Activated CD4-positive, alpha-beta T cell treated with anti-CD3 and anti-CD28 coated beads for 36 hours (primary cell): ENCODE measurements at regions of chrX and their contacts with region 1.

Region 1: GRCh38 chrX:15471016-15471415 is 22.1 kb downstream of the PIR start:
- DNase-seq: peak; percentile 69
- ATAC-seq: peak; percentile 68
- H3K4me3 Mint-ChIP-seq: no peak overlapping the region
- H3K27ac Mint-ChIP-seq: no peak overlapping the region
- H3K4me1 Mint-ChIP-seq: no peaks in the 10 kb centered on the region
- H3K27me3 Mint-ChIP-seq: no peaks in the 10 kb centered on the region

Region 2: DNA sequence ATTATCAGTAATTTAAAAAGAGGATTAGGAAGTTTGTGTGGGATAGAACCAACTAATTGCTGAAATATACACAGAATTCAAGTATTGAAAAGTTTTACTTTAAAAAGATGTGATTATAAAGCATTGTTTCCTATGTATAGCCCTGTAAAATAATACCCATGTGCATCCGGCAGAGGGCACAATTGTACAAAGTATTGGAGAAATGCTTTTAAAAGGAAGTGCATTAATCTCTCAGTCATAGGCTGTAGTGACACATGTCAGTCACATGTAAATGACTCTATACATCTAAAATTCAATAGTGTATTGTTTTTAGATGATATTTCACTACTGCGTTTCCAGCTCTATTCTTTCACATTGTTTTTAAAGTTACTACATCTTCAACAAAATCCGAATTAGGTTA is 1431.7 kb before region 1 on chrX:
- CTCF ChIA-PET with region 1: no interaction called
- POLR2A ChIA-PET with region 1: no interaction called
- intact Hi-C with region 1: loop called in 1 of 2 experiments (anchors 2 kb)
- DNase-seq: peak; percentile 71
- ATAC-seq: peak; percentile 68
- H3K4me3 Mint-ChIP-seq: no peak overlapping the region
- H3K27ac Mint-ChIP-seq: no peak overlapping the region
- H3K4me1 Mint-ChIP-seq: no peaks in the 10 kb centered on the region
- H3K27me3 Mint-ChIP-seq: no peaks in the 10 kb centered on the region

Region 3: DNA sequence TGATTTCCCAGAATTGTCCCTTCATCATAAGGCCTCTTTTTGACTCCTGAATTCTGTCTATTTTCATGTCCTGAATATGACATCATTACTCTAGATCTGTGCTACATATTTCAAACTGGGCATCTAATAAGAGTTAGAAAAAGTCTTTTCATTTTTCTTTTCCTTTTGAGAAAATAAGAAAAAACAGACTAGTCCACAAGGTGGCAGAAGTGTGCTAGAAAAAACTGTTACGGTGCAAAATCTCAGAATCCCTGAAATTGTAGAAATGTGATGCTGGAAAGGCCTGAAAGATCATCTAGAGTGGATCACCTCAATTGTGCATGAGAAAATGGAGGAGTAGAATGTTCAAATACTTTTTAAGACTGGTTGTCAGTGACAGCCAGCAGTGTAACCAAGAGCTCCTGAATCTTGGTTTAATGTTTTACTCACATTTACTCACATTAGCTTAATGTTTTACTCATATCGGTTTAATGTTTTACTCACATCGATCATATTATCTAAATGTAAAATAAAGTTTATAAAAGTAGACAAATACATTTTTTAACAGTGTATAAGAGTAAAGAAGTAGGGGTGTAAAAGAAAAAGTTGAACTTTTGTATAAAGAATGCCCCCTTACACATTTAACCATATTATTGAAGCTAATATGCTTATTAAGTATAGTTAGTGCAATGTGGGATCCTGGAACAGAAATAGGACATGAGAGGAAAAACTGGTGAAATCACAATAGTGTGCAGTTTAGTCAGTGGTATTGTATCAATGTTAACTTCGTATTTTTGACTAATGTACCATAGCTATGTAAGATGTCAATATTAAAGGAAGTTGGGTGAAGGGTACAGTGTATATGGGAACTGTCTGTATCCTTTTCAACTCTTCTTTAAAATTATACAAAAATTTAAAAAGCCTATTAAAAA is 170.8 kb before region 1 on chrX:
- CTCF ChIA-PET with region 1: no interaction called
- POLR2A ChIA-PET with region 1: no interaction called
- intact Hi-C with region 1: loop called (anchors 1 to 5 kb)
- DNase-seq: no peak
- ATAC-seq: no peak
- H3K4me3 Mint-ChIP-seq: no peak overlapping the region
- H3K27ac Mint-ChIP-seq: no peak overlapping the region
- H3K4me1 Mint-ChIP-seq: peaks cover 2% of the 10 kb centered on the region
- H3K27me3 Mint-ChIP-seq: peaks cover 1% of the 10 kb centered on the region

Region 4: GRCh38 chrX:15349046-15349445 is 122.0 kb before region 1 on chrX:
- CTCF ChIA-PET with region 1: interaction called, 32 read pairs
- POLR2A ChIA-PET with region 1: no interaction called
- intact Hi-C with region 1: loop called (anchors 1 to 2 kb)
- DNase-seq: peak; percentile 11
- ATAC-seq: peak; percentile 58
- H3K4me3 Mint-ChIP-seq: no peak overlapping the region
- H3K27ac Mint-ChIP-seq: no peak overlapping the region
- H3K4me1 Mint-ChIP-seq: no peaks in the 10 kb centered on the region
- H3K27me3 Mint-ChIP-seq: peaks cover 2% of the 10 kb centered on the region

Region 5: DNA sequence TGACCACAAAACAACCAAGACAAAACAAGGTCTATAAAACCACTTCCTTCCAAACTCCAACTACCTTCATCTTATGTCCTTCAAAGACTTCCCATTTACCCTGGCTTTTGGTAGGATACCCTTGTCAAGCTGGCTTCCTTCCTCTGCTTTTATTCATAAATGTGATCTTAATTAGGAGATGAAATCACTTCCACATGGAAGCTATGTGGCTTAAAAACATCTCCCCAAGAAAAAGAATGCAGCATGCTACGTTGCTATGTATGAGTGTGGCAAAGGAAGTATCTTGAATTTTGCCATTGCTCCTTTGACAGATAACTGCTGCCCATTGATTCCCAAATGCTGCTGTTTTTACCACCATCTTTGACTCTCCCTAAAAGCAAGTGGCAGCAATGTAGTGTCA is 40.4 kb before region 1 on chrX:
- CTCF ChIA-PET with region 1: no interaction called
- POLR2A ChIA-PET with region 1: no interaction called
- intact Hi-C with region 1: no loop called
- DNase-seq: no peak
- ATAC-seq: no peak
- H3K4me3 Mint-ChIP-seq: no peak overlapping the region
- H3K27ac Mint-ChIP-seq: no peak overlapping the region
- H3K4me1 Mint-ChIP-seq: no peaks in the 10 kb centered on the region
- H3K27me3 Mint-ChIP-seq: peaks cover 17% of the 10 kb centered on the region

Region 6: DNA sequence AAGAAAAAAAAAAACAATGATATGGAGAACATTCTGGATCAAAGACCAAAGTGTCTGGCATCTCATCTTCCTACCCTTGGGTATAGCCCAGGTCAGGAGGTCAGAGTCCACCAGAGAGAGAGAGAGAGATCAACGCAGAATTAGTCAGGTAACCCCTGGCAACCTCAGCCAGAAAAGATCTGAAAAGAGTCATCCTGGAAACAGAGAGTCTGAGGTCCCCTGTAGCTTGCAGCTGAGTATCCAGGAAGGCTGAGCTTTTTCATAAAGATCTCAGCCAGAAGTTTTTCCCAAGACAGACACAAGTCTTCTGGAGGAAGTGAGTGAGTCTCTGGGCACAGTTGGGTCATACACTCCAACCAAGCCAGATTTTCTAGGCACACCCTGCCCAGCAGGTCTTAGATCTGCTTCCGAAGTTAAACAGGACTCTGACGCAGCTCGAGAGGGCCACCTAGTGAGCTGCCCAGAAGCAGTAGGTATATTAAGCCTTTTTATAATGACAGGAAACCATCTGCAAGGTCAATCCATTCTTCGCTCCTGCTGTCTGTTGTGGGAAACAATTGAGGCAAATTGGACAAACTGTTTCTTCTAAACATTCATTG is 94.1 kb after region 1 on chrX:
- CTCF ChIA-PET with region 1: no interaction called
- POLR2A ChIA-PET with region 1: no interaction called
- intact Hi-C with region 1: loop called (anchors 1 kb)
- DNase-seq: peak; percentile 49
- ATAC-seq: no peak
- H3K4me3 Mint-ChIP-seq: no peak overlapping the region
- H3K27ac Mint-ChIP-seq: no peak overlapping the region
- H3K4me1 Mint-ChIP-seq: no peaks in the 10 kb centered on the region
- H3K27me3 Mint-ChIP-seq: peaks cover 11% of the 10 kb centered on the region

Region 7: GRCh38 chrX:16695079-16695676 is 1224.2 kb after region 1 on chrX:
- CTCF ChIA-PET with region 1: no interaction called
- POLR2A ChIA-PET with region 1: no interaction called
- intact Hi-C with region 1: loop called in 1 of 2 experiments (anchors 10 kb)
- DNase-seq: peak; percentile 72
- ATAC-seq: peak; percentile 39
- H3K4me3 Mint-ChIP-seq: no peak overlapping the region
- H3K27ac Mint-ChIP-seq: no peak overlapping the region
- H3K4me1 Mint-ChIP-seq: no peaks in the 10 kb centered on the region
- H3K27me3 Mint-ChIP-seq: no peaks in the 10 kb centered on the region